ENCODE measurements at regions of chr4 and their contacts with region 1.

Region 1: DNA sequence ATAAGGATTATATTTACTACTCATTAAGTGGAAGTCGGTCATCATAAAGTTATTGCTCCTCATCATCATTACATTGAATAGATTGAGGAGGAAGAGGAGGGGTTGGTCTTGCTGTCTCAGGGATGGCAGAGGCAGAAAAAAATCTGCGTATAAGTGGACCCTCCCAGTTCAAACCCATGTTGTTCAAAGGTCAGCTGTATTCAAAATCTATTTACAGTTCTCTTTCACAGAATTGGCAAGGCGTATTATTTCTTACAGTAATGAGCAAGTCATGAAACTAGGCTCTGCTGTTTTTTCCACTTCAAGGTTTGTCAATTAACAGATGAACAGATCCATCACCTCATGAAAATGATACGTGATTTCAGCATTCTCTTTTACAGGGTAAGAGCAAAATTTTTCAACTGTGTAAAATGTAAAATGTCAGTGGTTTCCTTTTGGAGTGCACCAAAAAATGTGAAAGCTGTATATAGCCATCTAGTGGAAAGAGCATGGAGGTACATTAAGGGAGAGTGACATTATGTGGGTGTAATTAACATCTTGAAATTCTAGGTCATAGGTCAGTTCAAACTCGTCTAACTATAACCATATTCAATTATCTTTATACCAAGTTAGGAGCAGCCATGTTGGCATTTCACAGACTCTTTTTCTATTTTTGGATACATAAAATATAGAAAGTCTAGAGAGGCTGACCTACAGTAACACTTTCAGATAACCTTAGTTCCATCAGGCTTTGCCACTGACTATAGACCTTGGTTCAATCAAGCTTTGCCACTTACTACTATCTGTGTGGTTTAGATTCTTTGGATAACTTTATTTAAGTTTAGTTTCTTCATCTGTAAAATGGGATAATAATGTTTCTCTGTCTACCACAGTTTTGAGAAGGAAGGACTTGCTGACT is 30.1 kb downstream of the NEIL3 start:
- DNase-seq: no peak
- H3K4me3 Mint-ChIP-seq: no peak overlapping the region
- H3K27ac Mint-ChIP-seq: peak overlapping the region; percentile 49
- H3K4me1 Mint-ChIP-seq: peaks cover 27% of the 10 kb centered on the region
- H3K27me3 Mint-ChIP-seq: no peaks in the 10 kb centered on the region

Region 2: DNA sequence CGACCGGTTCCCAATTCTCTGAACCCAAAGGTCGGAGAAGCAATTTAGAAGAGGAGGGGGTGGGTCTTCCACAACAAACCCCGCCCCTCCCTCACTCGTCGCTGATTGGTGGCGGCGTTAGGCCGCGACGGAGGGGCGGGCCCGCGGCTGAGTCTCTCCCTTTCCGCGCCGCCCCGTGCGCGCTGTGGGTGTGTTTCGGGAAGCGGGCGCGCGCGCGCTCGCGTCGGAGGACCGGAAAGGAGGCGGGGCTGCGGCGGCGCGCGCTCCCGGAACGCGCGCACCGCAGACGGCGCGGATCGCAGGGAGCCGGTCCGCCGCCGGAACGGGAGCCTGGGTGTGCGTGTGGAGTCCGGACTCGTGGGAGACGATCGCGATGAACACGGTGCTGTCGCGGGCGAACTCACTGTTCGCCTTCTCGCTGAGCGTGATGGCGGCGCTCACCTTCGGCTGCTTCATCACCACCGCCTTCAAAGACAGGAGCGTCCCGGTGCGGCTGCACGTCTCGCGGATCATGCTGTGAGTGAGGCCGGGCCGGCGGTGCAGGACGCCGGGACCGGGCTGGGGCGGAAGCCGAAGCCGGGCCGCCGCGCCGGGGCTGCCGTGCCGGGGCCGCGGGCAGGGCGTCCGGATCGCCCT is 1019.9 kb before region 1 on chr4 and contains the start of gene SPCS3:
- intact Hi-C with region 1: loop called (anchors 1 kb)
- DNase-seq: peak; percentile 92
- H3K4me3 Mint-ChIP-seq: peak within 1 kb of the TSS; percentile 98
- H3K27ac Mint-ChIP-seq: peak within 1 kb of the TSS; percentile 97
- H3K4me1 Mint-ChIP-seq: peaks cover 60% of the 10 kb centered on the region
- H3K27me3 Mint-ChIP-seq: no peaks in the 10 kb centered on the region
- total RNA-seq, gene SPCS3: 197 and 203 TPM in 2 replicates

Region 3: GRCh38 chr4:176377780-176378179 is 961.9 kb before region 1 on chr4:
- intact Hi-C with region 1: loop called (anchors 10 kb)
- DNase-seq: no peak
- H3K4me3 Mint-ChIP-seq: no peak overlapping the region
- H3K27ac Mint-ChIP-seq: no peak overlapping the region
- H3K4me1 Mint-ChIP-seq: peaks cover 5% of the 10 kb centered on the region
- H3K27me3 Mint-ChIP-seq: peaks cover 15% of the 10 kb centered on the region

Region 4: GRCh38 chr4:176789955-176790354 is 549.8 kb before region 1 on chr4:
- intact Hi-C with region 1: loop called (anchors 5 kb)
- DNase-seq: no peak
- H3K4me3 Mint-ChIP-seq: no peak overlapping the region
- H3K27ac Mint-ChIP-seq: no peak overlapping the region
- H3K4me1 Mint-ChIP-seq: no peaks in the 10 kb centered on the region
- H3K27me3 Mint-ChIP-seq: peaks cover 41% of the 10 kb centered on the region

Region 5: DNA sequence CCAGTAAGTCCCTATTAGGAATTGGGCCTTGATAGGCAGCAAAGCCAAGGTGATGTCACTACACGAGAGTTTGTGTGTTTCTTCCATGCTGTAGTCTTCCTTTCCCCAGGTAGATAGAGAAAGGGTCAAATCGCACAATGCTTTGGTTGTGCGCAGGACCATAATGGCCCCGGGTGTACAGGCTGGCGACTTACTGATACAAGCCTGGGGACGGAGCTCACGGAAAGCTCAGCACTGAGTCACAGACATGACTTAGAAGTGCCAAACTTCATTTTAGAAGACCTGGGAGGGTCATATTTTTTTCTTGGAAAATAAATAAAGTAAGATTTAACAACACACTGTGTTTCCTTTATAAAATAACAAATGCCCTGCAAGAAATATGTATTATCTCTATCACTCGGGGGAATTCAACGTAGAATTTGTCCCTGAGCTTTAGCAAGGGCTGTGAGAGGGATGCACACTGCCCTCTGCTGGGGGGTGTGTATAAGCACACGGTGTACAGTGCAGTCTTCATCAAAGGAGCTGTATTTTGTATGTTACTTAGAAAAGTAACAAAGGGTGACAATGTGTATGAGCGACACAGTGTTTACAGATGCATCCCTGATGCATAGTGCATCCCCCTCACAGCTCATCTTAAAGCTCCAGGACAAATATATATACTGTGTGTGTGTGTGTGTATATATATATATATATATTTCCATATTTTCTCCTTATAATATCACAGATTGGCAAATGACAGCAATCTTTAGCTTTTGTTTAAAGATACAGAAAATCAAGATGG is 292.5 kb before region 1 on chr4:
- intact Hi-C with region 1: loop called (anchors 1 kb)
- DNase-seq: peak; percentile 25
- H3K4me3 Mint-ChIP-seq: no peak overlapping the region
- H3K27ac Mint-ChIP-seq: no peak overlapping the region
- H3K4me1 Mint-ChIP-seq: no peaks in the 10 kb centered on the region
- H3K27me3 Mint-ChIP-seq: peaks cover 6% of the 10 kb centered on the region

Region 6: GRCh38 chr4:177108708-177109107 is 231.0 kb before region 1 on chr4:
- intact Hi-C with region 1: loop called (anchors 2 kb)
- DNase-seq: no peak
- H3K4me3 Mint-ChIP-seq: no peak overlapping the region
- H3K27ac Mint-ChIP-seq: no peak overlapping the region
- H3K4me1 Mint-ChIP-seq: no peaks in the 10 kb centered on the region
- H3K27me3 Mint-ChIP-seq: no peaks in the 10 kb centered on the region

Region 7: DNA sequence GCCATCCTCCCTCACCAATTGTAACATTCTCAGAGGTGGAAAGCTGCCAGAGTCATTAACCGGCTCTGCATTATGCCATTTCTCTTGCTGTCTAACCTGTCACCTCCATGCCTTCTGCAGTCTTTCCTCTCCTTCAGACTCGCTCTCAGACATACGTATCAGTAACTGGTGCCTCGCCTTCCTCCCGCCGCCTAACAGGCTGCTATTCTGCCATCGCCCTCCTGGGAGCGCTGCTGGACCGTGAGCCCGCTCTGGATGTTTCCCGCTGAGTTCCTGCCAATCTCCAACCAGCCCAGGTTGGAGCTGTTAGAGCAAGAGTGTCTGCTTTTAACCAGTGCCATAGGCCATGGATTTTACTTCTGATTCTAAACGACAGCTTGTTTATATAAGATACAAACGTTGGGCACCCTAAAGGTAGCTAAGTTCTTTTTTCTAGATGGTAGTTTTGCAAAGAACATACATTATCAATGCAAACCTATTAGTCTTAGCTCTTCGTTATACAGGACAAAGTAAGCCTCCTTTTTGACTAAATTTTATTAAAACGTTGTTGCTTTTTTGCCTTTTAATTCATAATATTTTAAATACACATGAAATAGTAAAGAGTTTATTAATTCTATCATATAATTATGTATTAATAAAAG is 89.5 kb before region 1 on chr4:
- intact Hi-C with region 1: loop called (anchors 1 kb)
- DNase-seq: peak; percentile 66
- H3K4me3 Mint-ChIP-seq: no peak overlapping the region
- H3K27ac Mint-ChIP-seq: no peak overlapping the region
- H3K4me1 Mint-ChIP-seq: peaks cover 15% of the 10 kb centered on the region
- H3K27me3 Mint-ChIP-seq: peaks cover 15% of the 10 kb centered on the region

Region 8: DNA sequence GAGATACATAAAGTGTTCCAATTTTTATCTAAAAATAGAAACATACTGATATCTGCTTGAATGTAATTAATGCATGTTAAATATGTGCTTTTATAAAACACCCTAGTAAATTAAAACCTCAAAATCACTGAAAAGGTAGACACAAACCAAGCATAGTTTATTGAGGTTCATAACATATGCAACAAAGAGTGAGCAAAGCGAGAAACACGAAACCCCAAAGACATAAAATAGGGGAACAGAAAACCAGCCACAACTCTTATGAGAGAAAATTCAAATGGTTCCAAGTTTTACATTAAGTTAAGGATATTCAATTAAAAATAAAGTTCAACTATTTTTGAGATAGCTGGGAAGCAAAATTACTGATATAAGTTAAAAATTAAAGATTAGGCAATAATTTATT is 438.9 kb after region 1 on chr4:
- intact Hi-C with region 1: no loop called
- DNase-seq: no peak
- H3K4me3 Mint-ChIP-seq: no peak overlapping the region
- H3K27ac Mint-ChIP-seq: no peak overlapping the region
- H3K4me1 Mint-ChIP-seq: no peaks in the 10 kb centered on the region
- H3K27me3 Mint-ChIP-seq: peaks cover 3% of the 10 kb centered on the region